ENCODE measurements at regions of chr17 and their contacts with region 1.

Region 1: DNA sequence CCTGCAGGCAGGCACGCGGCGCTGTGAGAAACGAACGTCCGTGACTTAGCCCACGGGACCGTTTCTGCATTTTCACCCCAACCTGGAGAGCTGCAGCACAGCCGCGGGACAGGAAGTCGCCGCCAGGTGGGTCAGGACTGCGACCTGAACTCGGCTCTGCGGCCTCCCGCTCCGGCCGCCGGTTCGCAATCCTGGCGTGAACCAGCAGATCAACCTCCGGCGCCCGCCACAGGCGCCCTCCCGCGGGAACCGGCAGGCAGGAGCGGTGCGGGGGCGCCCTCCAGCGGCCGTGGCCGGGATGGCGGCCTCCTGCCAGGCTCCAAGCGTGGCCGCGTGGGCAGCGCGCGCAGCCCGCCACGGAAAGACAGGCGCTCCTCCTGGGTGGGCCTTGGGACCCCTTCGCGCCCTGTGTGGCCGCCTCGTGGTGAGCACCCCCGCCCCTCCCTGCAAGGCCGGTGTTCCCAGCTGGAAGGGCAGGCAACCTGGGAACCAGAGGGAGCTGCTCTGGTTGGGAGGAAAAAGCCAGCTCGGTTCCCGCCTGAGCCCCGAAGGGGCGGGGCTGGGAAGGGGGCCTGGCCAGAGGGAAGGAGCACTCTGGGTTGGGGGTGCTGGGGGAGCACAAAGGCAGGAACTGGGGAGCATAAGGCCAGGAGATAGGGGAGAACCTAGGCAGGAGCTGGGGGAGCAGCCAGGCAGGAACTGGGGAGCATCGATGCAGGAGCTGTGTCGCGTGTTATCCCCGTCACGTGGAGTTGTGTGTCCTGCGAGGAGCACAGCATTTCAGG is 28.2 kb downstream of the ACTG1 start:
- DNase-seq: peak; percentile 71
- ATAC-seq: peak; percentile 79
- H3K4me3 ChIP-seq: peak overlapping the region; percentile 45
- H3K27ac ChIP-seq: peak overlapping the region; percentile 50; the same call in 1 of the 2 replicates
- H3K4me1 ChIP-seq: peaks cover 14% of the 10 kb centered on the region
- H3K27me3 ChIP-seq: no peaks in the 10 kb centered on the region
- CTCF ChIP-seq: peak; percentile 99
- POLR2A ChIP-seq: no peak
- RAD21 ChIP-seq: peak; percentile 97

Region 2: GRCh38 chr17:81253358-81254131 is 230.8 kb before region 1 on chr17:
- CTCF ChIA-PET with region 1: interaction called, 14 read pairs
- POLR2A ChIA-PET with region 1: no interaction called
- dilution Hi-C with region 1: no loop called
- in situ Hi-C with region 1: loop called (anchors 5 kb)
- intact Hi-C with region 1: loop called (anchors 1 kb)
- DNase-seq: peak; percentile 31
- ATAC-seq: peak; percentile 60
- H3K4me3 ChIP-seq: no peak overlapping the region
- H3K27ac ChIP-seq: no peak overlapping the region
- H3K4me1 ChIP-seq: peaks cover 12% of the 10 kb centered on the region
- H3K27me3 ChIP-seq: no peaks in the 10 kb centered on the region
- CTCF ChIP-seq: peak; percentile 85
- POLR2A ChIP-seq: 0 out of 2 replicates have a peak, but pooled peaks have one; percentile 41
- RAD21 ChIP-seq: peak; percentile 96